ENCODE measurements at regions of chr12 and their contacts with region 1.

Region 1: GRCh38 chr12:46303039-46303666 is 34.3 kb upstream of the SLC38A1 start:
- DNase-seq: peak; percentile 7 to 84 (median 59)
- ATAC-seq: peak; percentile 81
- H3K4me3 ChIP-seq: no peak overlapping the region
- H3K4me3 Mint-ChIP-seq: no peak overlapping the region
- H3K27ac ChIP-seq: no peak overlapping the region
- H3K27ac Mint-ChIP-seq: no peak overlapping the region
- H3K4me1 ChIP-seq: peaks cover 4% of the 10 kb centered on the region
- H3K4me1 Mint-ChIP-seq: peaks cover 21% of the 10 kb centered on the region
- H3K27me3 ChIP-seq: no peaks in the 10 kb centered on the region
- H3K27me3 Mint-ChIP-seq: no peaks in the 10 kb centered on the region
- CTCF ChIP-seq: peak; percentile 87

Region 2: DNA sequence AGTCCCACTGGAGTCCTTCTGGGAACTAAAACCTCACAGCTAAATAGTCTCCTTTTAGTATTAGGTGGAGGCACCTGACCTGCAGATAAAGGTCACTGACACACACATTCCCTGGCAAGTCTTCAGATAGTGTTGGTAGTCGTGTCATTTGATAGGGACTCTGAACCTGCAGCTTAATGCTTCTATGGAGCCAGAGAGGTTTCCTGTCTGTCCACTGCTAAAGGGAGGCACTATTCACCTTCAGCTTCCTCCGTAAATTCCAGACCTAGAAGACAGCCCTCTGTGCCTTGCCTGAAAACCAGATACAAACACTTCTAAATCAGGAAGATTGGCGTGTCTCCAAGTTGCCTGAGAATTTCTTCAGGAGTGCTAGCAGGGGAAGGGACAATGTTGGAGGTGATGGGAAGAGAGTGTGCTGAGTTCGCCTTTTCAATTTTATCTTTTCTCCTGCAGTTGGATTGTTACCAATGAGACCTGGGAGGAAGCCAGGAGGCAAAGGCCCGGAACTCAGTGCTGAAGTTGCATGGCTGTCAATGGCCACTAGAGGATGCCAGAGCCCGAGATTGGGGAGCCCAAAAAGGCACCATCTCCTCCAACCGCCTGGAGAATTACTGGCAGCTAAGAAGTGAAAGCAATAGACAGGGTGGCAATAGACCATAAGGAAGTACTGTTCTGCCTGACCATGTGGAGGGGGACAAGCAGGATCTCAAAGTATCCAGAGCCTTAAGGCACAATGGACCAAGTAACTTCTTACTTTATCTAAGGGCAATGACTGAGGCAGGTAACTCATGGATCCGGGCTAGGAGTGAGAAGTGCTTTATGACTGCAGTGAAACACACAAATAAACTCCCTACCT is 231.2 kb before region 1 on chr12:
- CTCF ChIA-PET with region 1: interaction called, 3 read pairs
- POLR2A ChIA-PET with region 1: no interaction called
- intact Hi-C with region 1: loop called in 1 of 2 experiments (anchors 5 kb)
- DNase-seq: peak; percentile 27 to 75 (median 57)
- ATAC-seq: peak; percentile 89
- H3K4me3 ChIP-seq: no peak overlapping the region
- H3K4me3 Mint-ChIP-seq: no peak overlapping the region
- H3K27ac ChIP-seq: no peak overlapping the region
- H3K27ac Mint-ChIP-seq: no peak overlapping the region
- H3K4me1 ChIP-seq: no peaks in the 10 kb centered on the region
- H3K4me1 Mint-ChIP-seq: no peaks in the 10 kb centered on the region
- H3K27me3 ChIP-seq: no peaks in the 10 kb centered on the region
- H3K27me3 Mint-ChIP-seq: peaks cover 7% of the 10 kb centered on the region
- CTCF ChIP-seq: peak; percentile 88

Region 3: DNA sequence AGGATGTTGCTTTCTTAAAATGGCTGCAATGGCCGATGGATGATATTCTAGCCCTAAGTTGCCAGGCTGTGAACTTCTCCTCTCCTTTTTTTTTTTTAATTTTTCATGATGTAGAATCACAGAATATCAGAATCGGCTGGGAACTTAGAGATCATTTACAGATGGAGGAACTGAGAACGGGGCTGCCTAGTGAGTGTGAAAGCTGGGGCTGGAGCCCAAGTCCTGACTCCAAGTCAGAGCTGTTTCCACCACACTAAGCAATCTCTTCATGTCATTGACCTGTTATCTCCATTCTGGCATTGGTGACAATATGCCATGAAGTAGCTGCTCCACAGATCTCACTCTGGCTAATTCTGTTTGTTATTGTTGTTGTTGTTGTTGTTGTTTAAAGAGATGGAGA is 156.0 kb before region 1 on chr12:
- CTCF ChIA-PET with region 1: interaction called, 14 read pairs
- POLR2A ChIA-PET with region 1: interaction called, 3 read pairs
- intact Hi-C with region 1: no loop called
- DNase-seq: no peak
- ATAC-seq: no peak
- H3K4me3 ChIP-seq: no peak overlapping the region
- H3K4me3 Mint-ChIP-seq: no peak overlapping the region
- H3K27ac ChIP-seq: no peak overlapping the region
- H3K27ac Mint-ChIP-seq: no peak overlapping the region
- H3K4me1 ChIP-seq: no peaks in the 10 kb centered on the region
- H3K4me1 Mint-ChIP-seq: no peaks in the 10 kb centered on the region
- H3K27me3 ChIP-seq: no peaks in the 10 kb centered on the region
- H3K27me3 Mint-ChIP-seq: peaks cover 13% of the 10 kb centered on the region
- CTCF ChIP-seq: no peak

Region 4: DNA sequence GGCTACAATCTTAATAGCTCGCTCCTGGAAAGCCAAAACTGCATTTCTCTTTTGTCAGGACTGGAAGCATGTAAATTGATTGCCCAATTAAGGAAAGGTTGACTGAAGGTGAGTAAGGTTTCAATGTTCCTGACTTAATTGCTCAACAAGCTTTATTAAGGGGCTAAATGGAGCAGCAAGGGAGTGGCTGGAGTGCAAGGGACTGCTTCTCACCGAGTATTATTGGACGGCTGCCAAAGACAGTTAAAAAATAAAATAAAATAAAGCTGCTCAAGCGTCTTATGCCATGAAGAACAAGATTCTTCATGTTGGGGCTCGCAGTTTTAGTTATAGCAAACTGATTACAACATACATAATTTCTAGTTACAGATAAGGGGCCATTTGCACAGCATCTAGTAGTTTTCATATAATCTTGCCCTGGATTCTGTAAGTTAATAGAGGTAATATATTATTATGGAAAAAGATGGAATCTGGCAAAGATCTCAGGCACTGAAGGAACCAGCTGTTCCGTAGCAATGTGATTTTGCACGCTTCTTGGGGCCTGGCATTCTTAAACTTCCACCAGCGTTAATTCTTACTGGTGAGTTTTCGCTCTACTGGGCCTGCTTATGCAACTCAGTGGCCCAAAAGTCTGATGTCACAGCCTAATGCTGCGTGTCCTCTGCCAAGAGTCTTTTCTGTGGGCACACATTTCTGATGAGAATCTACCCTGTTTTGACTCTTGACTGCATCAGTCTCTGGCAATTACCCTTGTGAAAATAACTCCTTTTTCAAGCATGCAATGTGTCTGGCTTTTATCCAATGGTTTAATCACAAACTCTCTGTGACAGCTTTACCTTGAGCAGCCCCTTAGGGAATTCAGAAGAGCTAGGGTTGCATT is 142.8 kb before region 1 on chr12:
- CTCF ChIA-PET with region 1: interaction called, 25 read pairs
- POLR2A ChIA-PET with region 1: no interaction called
- intact Hi-C with region 1: no loop called
- DNase-seq: no peak
- ATAC-seq: no peak
- H3K4me3 ChIP-seq: no peak overlapping the region
- H3K4me3 Mint-ChIP-seq: no peak overlapping the region
- H3K27ac ChIP-seq: no peak overlapping the region
- H3K27ac Mint-ChIP-seq: no peak overlapping the region
- H3K4me1 ChIP-seq: peaks cover 8% of the 10 kb centered on the region
- H3K4me1 Mint-ChIP-seq: peaks cover 16% of the 10 kb centered on the region
- H3K27me3 ChIP-seq: no peaks in the 10 kb centered on the region
- H3K27me3 Mint-ChIP-seq: no peaks in the 10 kb centered on the region
- CTCF ChIP-seq: no peak

Region 5: GRCh38 chr12:46209914-46210872 is 93.0 kb before region 1 on chr12:
- CTCF ChIA-PET with region 1: interaction called, 7 read pairs
- POLR2A ChIA-PET with region 1: interaction called, 4 read pairs
- intact Hi-C with region 1: loop called (anchors 2 kb)
- DNase-seq: peak in 8 of 9 experiments; percentile 39 to 84 (median 66)
- ATAC-seq: peak; percentile 63
- H3K4me3 ChIP-seq: no peak overlapping the region
- H3K4me3 Mint-ChIP-seq: peak overlapping the region; percentile 69
- H3K27ac ChIP-seq: peak overlapping the region; percentile 38 to 83
- H3K27ac Mint-ChIP-seq: peak overlapping the region; percentile 94
- H3K4me1 ChIP-seq: peaks cover 85% of the 10 kb centered on the region
- H3K4me1 Mint-ChIP-seq: peaks cover 95% of the 10 kb centered on the region
- H3K27me3 ChIP-seq: no peaks in the 10 kb centered on the region
- H3K27me3 Mint-ChIP-seq: no peaks in the 10 kb centered on the region
- CTCF ChIP-seq: no peak

Region 6: GRCh38 chr12:46292755-46293402 is 10.3 kb before region 1 on chr12:
- CTCF ChIA-PET with region 1: interaction called, 11 read pairs
- POLR2A ChIA-PET with region 1: no interaction called
- intact Hi-C with region 1: no loop called
- DNase-seq: no peak
- ATAC-seq: no peak
- H3K4me3 ChIP-seq: no peak overlapping the region
- H3K4me3 Mint-ChIP-seq: no peak overlapping the region
- H3K27ac ChIP-seq: no peak overlapping the region
- H3K27ac Mint-ChIP-seq: no peak overlapping the region
- H3K4me1 ChIP-seq: no peaks in the 10 kb centered on the region
- H3K4me1 Mint-ChIP-seq: no peaks in the 10 kb centered on the region
- H3K27me3 ChIP-seq: no peaks in the 10 kb centered on the region
- H3K27me3 Mint-ChIP-seq: no peaks in the 10 kb centered on the region
- CTCF ChIP-seq: no peak

Measured in CD8-positive, alpha-beta T cell (primary cell).